K562 (cell line): ENCODE measurements at regions of chr6 and their contacts with region 1.

Region 1: GRCh38 chr6:49739423-49739822 is 4.8 kb downstream of the CRISP3 start:
- DNase-seq: no peak
- ATAC-seq: no peak
- H3K4me3 ChIP-seq: no peak overlapping the region
- H3K27ac ChIP-seq: no peak overlapping the region
- H3K4me1 ChIP-seq: peaks cover 0 to 29% of the 10 kb centered on the region in 2 experiments; a peak in 4 of 5 replicates
- H3K27me3 ChIP-seq: no peaks in the 10 kb centered on the region
- CTCF ChIP-seq: no peak
- EP300 ChIP-seq: no peak
- POLR2A ChIP-seq: no peak
- RAD21 ChIP-seq: no peak

Region 2: GRCh38 chr6:48535582-48536009 is 1203.8 kb before region 1 on chr6:
- CTCF ChIA-PET with region 1: no interaction called
- POLR2A ChIA-PET with region 1: no interaction called
- in situ Hi-C with region 1: no loop called
- intact Hi-C with region 1: no loop called
- DNase-seq: no peak
- ATAC-seq: no peak
- H3K4me3 ChIP-seq: no peak overlapping the region
- H3K27ac ChIP-seq: no peak overlapping the region
- H3K4me1 ChIP-seq: no peaks in the 10 kb centered on the region
- H3K27me3 ChIP-seq: no peaks in the 10 kb centered on the region
- CTCF ChIP-seq: no peak
- EP300 ChIP-seq: no peak
- POLR2A ChIP-seq: no peak
- RAD21 ChIP-seq: no peak

Region 3: GRCh38 chr6:49462927-49463611 is 276.4 kb before region 1 on chr6 and contains the starts of genes CENPQ and MMUT:
- CTCF ChIA-PET with region 1: no interaction called
- POLR2A ChIA-PET with region 1: no interaction called
- in situ Hi-C with region 1: no loop called
- intact Hi-C with region 1: loop called (anchors 5 kb)
- DNase-seq: peak; percentile 97 to 99 (median 97)
- ATAC-seq: peak; percentile 99
- H3K4me3 ChIP-seq: peak within 1 kb of the TSS; percentile 74
- H3K27ac ChIP-seq: peak within 1 kb of the TSS; percentile 85
- H3K4me1 ChIP-seq: peaks cover 0 to 8% of the 10 kb centered on the region in 2 experiments; a peak in 2 of 5 replicates
- H3K27me3 ChIP-seq: no peaks in the 10 kb centered on the region
- CTCF ChIP-seq: no peak; a peak in 1 of 6 replicates
- EP300 ChIP-seq: peak; percentile 60
- POLR2A ChIP-seq: peak; percentile 93
- RAD21 ChIP-seq: no peak
- polyA plus RNA-seq, gene CENPQ: 39.5 to 48.3 TPM
- polyA plus RNA-seq, gene MMUT: 21.0 to 26.4 TPM

Region 4: GRCh38 chr6:49531774-49532569 is 207.5 kb before region 1 on chr6:
- CTCF ChIA-PET with region 1: no interaction called
- POLR2A ChIA-PET with region 1: no interaction called
- in situ Hi-C with region 1: no loop called
- intact Hi-C with region 1: loop called (anchors 5 kb)
- DNase-seq: peak; percentile 55 to 72 (median 60)
- ATAC-seq: peak; percentile 95
- H3K4me3 ChIP-seq: no peak overlapping the region
- H3K27ac ChIP-seq: no peak overlapping the region; the same call in 2 of the 3 replicates
- H3K4me1 ChIP-seq: no peaks in the 10 kb centered on the region; a peak in 1 of 5 replicates
- H3K27me3 ChIP-seq: no peaks in the 10 kb centered on the region
- CTCF ChIP-seq: peak; percentile 79 to 100 (median 99)
- EP300 ChIP-seq: 0 out of 2 replicates have a peak, but pooled peaks have one; percentile 40
- POLR2A ChIP-seq: no peak
- RAD21 ChIP-seq: peak; percentile 98 to 99

Region 5: DNA sequence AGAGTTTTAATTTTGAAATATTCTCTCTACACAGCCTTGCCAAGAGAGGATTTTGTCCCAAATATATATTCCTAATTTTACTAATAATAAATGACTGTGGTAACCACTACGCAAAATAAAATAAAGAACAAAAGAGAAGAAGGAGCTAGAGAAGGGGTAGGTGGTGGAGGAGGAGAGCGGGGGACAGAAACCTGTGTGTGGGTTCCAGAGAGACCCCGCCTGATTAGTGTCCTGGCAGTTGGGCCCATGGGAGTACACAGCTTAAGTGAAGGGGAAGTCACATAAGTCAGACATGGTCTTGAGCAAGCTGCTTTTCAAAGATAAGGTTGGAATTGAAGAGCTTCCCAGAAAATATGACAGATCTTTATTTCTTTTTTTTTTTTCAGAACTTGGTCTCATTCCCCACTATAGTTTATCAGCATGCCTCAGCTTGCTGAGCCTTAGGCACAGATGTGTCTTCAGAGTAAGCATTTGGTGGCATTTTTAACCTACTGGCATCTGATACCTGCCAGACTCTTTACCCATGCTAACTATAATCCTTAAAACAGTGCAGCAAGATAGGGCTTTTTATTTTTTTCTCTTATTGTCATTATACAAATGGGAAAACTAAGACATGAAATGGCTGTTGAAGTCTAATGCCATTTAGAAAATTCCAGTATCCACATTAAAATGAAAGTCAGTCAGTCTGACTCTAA is 93.1 kb before region 1 on chr6:
- CTCF ChIA-PET with region 1: no interaction called
- POLR2A ChIA-PET with region 1: no interaction called
- in situ Hi-C with region 1: no loop called
- intact Hi-C with region 1: loop called (anchors 1 kb)
- DNase-seq: peak; percentile 89 to 97 (median 92)
- ATAC-seq: peak; percentile 92
- H3K4me3 ChIP-seq: no peak overlapping the region
- H3K27ac ChIP-seq: peak overlapping the region; percentile 79
- H3K4me1 ChIP-seq: peaks cover 3 to 29% of the 10 kb centered on the region in 2 experiments; a peak in 3 of 5 replicates
- H3K27me3 ChIP-seq: no peaks in the 10 kb centered on the region
- CTCF ChIP-seq: no peak
- EP300 ChIP-seq: peak; percentile 100
- POLR2A ChIP-seq: no peak; the same call in 1 of the 2 replicates
- RAD21 ChIP-seq: peak; percentile 32 to 35; a peak in 3 of 4 replicates

Region 6: DNA sequence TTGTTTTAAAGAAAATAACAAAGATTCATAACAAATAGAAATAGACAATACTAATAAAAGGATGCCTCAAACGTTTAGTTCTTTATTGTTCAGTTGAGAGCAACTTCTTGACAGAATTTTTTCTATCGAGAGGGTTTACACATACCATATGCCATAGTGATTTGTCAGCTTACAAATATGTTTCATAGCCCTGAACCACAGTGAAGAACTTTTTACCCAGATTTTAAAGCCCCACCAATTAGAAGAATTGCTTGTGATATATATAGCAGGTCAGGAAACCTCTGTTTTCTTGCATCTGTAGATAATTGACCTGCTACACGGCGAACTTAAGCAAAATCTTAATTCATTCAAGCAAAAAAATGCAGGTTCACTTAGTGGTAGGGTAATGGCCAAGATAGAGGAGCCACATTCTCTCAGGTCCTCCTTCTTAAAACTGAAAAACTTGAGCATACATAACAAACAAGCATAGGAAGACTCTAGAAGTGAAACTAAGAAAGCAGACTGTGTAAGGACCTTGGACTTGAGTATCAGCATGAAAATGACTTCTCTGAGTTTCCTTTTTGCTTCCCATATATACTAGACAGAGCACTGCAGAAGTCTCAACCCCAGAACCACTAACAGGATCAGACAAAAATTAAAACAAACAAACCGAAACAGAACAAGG is 87.5 kb after region 1 on chr6:
- CTCF ChIA-PET with region 1: no interaction called
- POLR2A ChIA-PET with region 1: no interaction called
- in situ Hi-C with region 1: no loop called
- intact Hi-C with region 1: loop called (anchors 5 kb)
- DNase-seq: peak in 1 of 4 experiments; percentile 49
- ATAC-seq: peak; percentile 92
- H3K4me3 ChIP-seq: peak overlapping the region; percentile 23
- H3K27ac ChIP-seq: peak overlapping the region; percentile 54
- H3K4me1 ChIP-seq: no peaks in the 10 kb centered on the region
- H3K27me3 ChIP-seq: no peaks in the 10 kb centered on the region
- CTCF ChIP-seq: no peak
- EP300 ChIP-seq: no peak
- POLR2A ChIP-seq: no peak
- RAD21 ChIP-seq: no peak